ENCODE measurements at regions of chr3 and their contacts with region 1.

Region 1: DNA sequence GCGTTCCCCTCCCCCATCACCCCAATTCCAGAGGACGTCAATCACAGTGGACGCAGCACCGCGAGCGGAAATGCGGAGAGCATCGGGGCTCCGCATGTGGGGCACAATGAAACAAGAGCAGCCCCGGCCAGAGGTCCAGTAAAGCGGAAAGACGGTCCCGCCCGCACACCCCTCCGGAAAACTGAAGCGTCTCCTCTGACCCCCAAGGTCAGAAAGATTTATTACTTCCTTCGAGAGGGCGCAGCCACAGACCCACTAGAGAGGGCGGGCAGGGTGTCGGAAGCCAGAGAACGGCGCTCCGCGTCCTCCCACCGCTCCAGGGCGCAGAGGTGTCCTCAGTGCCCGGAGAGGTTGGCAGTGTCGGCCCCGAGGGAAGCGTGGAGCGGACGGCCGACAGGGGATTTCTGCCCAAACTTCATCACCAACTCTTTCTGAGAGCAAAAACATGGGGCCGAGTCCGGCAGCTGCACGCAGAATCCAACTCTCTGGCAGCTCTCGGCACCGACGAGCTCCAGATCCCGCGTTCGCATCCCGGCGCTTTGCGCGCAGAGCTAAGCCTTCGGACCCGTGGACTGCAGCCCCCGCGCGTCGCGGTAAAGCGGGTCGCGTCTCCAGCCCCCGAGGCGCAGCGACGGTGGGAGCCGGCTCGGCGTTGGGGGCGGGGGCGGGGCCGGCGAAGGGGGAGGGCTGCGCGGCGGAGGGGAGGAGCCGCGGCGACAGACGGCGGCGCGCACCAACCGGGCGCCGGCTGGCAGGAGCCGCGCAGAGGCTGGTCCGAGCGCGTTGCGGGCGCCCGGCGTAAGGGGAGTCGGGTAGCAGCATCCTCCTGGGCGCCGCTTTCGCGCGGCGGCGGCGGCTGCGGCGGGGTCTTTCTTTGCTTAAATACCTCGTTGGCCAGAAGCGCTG is at the start of gene CHST2:
- DNase-seq: peak; percentile 75
- H3K4me3 Mint-ChIP-seq: peak within 1 kb of the TSS; percentile 89
- H3K27ac Mint-ChIP-seq: peak within 1 kb of the TSS; percentile 75
- H3K4me1 Mint-ChIP-seq: peaks cover 48% of the 10 kb centered on the region
- H3K27me3 Mint-ChIP-seq: peaks cover 10% of the 10 kb centered on the region
- total RNA-seq, gene CHST2: 7.4 and 7.7 TPM in 2 replicates

Region 2: DNA sequence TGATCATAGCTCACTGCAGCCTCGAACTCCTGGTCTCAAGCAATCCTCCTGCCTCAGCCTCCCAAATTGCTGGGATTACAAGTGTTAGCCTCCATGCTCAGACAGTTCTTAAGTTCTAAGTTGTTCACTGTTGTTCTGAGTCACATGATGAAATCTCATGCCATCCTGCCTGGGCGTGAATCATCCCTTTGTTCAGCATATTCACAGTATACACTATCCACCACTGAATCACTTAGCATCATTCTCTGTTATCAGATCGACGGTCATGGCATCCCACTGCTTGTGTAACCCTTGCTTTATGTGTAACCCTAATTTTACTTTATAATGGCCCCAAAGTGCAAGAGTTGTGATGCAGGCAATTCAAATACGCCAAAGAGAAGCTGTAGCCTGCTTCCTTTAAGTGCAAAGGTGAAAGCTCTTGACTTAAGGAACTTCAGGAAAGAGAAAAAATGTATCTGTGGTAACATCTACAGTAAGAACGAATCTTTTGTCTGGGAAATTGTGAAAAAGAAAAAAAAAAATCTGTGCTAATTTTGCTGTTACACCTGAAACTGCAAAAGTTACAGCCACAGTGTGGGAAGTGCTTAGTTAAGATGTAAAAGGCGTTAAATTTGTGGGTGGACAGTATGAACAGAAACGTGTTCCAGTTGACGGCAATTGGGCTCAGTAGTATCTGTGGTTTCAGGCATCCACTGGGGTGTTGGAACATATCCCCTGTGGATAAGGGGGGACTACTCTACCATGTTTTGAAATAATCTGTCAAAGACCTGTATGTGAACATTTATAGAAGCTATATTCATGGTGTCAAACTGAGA is 311.0 kb before region 1 on chr3:
- intact Hi-C with region 1: no loop called
- DNase-seq: no peak
- H3K4me3 Mint-ChIP-seq: no peak overlapping the region
- H3K27ac Mint-ChIP-seq: no peak overlapping the region
- H3K4me1 Mint-ChIP-seq: peaks cover 7% of the 10 kb centered on the region
- H3K27me3 Mint-ChIP-seq: peaks cover 10% of the 10 kb centered on the region

Region 3: DNA sequence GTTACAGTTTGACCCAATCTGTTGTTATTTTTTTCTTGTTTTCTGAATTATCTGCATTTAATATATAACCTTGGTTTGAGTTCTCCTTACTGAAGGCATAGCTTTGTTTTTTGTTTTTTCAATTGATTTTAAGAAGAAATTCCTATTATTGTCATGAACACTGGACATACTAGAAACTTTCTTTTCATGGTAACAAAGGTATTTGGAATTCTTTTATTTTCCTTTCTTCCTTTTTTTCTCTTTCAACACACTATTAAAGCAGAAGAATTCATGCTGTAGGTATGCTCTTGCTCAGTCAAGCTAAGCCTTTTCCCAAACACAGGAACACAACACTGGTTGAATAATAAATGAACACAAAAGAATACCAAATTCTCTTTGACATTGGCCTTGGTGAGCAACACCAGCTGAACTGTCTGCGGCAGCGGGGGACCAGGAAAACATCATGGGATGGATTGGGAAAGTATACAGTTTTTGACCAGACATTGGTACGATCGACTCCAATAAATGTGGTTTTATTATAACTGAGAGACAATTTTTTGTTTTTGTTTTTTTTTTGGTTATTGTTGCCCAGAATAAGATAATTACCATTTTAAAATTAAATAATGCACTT is 94.8 kb before region 1 on chr3:
- intact Hi-C with region 1: no loop called
- DNase-seq: no peak
- H3K4me3 Mint-ChIP-seq: no peak overlapping the region
- H3K27ac Mint-ChIP-seq: no peak overlapping the region
- H3K4me1 Mint-ChIP-seq: no peaks in the 10 kb centered on the region
- H3K27me3 Mint-ChIP-seq: no peaks in the 10 kb centered on the region

Region 4: DNA sequence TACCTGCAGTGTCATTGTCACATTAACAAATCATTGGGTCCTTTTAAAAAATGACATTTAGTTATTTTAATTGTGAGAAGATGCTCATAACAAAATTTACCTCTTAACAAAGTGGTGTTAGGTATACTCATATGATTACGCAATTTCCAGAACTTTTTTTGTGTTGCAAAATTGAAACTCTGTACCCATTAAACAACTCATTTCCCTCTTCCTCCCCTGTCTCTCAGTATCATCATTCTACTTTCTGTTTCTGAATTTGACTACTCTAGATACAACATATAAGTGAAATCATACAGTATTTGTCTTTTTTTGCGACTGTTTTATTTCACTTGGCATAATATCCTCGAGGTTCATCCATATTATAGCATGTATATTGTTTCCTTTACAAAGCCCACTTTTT is 58.4 kb before region 1 on chr3:
- intact Hi-C with region 1: loop called (anchors 1 kb)
- DNase-seq: no peak
- H3K4me3 Mint-ChIP-seq: no peak overlapping the region
- H3K27ac Mint-ChIP-seq: no peak overlapping the region
- H3K4me1 Mint-ChIP-seq: peaks cover 19% of the 10 kb centered on the region
- H3K27me3 Mint-ChIP-seq: no peaks in the 10 kb centered on the region

Region 5: DNA sequence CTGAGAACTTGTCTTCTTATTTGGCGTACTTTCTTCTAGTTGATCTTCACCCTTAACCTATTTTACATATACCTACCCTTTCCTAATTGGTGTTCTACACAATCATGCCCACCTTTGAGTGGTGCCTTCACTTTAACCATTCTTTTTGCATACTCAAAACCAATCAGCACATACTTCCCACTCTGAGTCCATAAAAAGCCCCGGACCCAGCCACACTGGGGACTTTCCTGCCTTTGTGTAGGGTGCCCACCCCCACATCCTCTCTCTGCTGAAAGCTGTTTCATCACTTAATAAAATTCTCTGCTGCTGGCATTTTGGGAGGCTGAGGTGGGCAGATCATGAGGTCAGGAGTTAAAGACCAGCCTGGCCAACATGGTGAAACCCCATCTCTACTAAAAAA is 15.6 kb before region 1 on chr3:
- intact Hi-C with region 1: no loop called
- DNase-seq: no peak
- H3K4me3 Mint-ChIP-seq: no peak overlapping the region
- H3K27ac Mint-ChIP-seq: no peak overlapping the region
- H3K4me1 Mint-ChIP-seq: no peaks in the 10 kb centered on the region
- H3K27me3 Mint-ChIP-seq: peaks cover 17% of the 10 kb centered on the region

Region 6: GRCh38 chr3:143192193-143192592 is 72.9 kb after region 1 on chr3:
- intact Hi-C with region 1: no loop called
- DNase-seq: no peak
- H3K4me3 Mint-ChIP-seq: no peak overlapping the region
- H3K27ac Mint-ChIP-seq: no peak overlapping the region
- H3K4me1 Mint-ChIP-seq: peaks cover 14% of the 10 kb centered on the region
- H3K27me3 Mint-ChIP-seq: no peaks in the 10 kb centered on the region

Region 7: GRCh38 chr3:143207338-143207961 is 88.2 kb after region 1 on chr3:
- intact Hi-C with region 1: loop called (anchors 5 kb)
- DNase-seq: no peak
- H3K4me3 Mint-ChIP-seq: no peak overlapping the region
- H3K27ac Mint-ChIP-seq: peak overlapping the region; percentile 61
- H3K4me1 Mint-ChIP-seq: peaks cover 33% of the 10 kb centered on the region
- H3K27me3 Mint-ChIP-seq: no peaks in the 10 kb centered on the region

Region 8: DNA sequence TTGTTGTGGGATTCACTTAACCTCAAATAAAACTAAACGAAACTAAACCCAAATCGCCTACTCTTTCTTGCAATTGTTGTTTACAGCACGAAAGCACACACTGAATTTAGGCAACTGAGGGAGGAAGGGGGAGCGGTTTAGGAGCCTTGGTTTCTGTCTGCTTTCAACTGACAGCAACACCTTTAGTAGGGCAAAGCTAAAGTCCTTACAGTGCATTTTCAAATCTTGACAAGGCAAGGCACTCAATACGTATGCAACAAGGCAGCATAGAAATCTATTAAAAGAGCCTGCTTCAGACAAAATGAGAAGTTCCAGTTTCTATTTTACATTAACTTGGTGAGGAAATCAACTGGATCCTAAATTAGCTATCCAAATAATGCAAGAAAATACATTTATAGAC is 174.9 kb after region 1 on chr3:
- intact Hi-C with region 1: loop called (anchors 5 kb)
- DNase-seq: no peak
- H3K4me3 Mint-ChIP-seq: no peak overlapping the region
- H3K27ac Mint-ChIP-seq: no peak overlapping the region
- H3K4me1 Mint-ChIP-seq: peaks cover 44% of the 10 kb centered on the region
- H3K27me3 Mint-ChIP-seq: no peaks in the 10 kb centered on the region

Region 9: GRCh38 chr3:143421556-143421955 is 302.3 kb after region 1 on chr3:
- intact Hi-C with region 1: loop called (anchors 5 kb)
- DNase-seq: no peak
- H3K4me3 Mint-ChIP-seq: no peak overlapping the region
- H3K27ac Mint-ChIP-seq: no peak overlapping the region
- H3K4me1 Mint-ChIP-seq: peaks cover 11% of the 10 kb centered on the region
- H3K27me3 Mint-ChIP-seq: peaks cover 23% of the 10 kb centered on the region

Region 10: DNA sequence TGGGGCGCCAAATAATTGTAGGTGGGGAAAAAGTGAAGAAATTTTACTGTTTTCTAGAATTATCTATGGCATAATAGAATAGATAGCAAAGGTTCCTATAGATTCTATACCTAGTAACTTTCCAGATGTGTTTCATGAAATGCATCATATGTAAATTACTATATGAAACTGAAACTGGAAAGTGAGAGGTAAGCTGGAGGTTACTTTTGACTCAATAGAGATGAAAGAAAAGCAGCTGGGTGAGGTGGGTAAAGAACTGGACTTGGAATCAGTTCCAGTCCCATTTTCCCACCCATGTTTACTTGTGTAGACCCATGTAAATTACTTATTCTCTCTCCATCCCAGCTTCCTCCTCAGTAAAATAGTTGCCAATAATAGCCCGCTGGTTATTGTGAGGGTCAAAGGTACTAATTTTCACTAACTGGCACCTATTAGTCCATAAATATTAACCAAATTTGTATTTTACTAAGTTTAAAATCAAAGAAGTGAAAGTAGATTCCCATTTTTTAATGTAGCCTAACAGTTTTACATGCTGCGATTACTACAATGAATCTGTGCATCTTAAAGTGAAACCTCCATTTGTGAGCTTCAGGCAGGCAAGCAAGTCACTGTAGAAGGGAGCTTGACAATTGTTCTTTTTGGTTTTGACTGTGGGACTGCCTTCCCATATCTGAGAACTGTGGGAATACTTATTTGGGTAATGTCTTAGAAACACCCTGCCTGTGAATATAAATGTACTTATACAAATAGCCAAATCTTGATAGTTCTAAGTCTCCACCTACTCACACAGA is 416.9 kb after region 1 on chr3:
- intact Hi-C with region 1: loop called (anchors 5 kb)
- DNase-seq: no peak
- H3K4me3 Mint-ChIP-seq: no peak overlapping the region
- H3K27ac Mint-ChIP-seq: no peak overlapping the region
- H3K4me1 Mint-ChIP-seq: peaks cover 12% of the 10 kb centered on the region
- H3K27me3 Mint-ChIP-seq: peaks cover 14% of the 10 kb centered on the region

Region 11: DNA sequence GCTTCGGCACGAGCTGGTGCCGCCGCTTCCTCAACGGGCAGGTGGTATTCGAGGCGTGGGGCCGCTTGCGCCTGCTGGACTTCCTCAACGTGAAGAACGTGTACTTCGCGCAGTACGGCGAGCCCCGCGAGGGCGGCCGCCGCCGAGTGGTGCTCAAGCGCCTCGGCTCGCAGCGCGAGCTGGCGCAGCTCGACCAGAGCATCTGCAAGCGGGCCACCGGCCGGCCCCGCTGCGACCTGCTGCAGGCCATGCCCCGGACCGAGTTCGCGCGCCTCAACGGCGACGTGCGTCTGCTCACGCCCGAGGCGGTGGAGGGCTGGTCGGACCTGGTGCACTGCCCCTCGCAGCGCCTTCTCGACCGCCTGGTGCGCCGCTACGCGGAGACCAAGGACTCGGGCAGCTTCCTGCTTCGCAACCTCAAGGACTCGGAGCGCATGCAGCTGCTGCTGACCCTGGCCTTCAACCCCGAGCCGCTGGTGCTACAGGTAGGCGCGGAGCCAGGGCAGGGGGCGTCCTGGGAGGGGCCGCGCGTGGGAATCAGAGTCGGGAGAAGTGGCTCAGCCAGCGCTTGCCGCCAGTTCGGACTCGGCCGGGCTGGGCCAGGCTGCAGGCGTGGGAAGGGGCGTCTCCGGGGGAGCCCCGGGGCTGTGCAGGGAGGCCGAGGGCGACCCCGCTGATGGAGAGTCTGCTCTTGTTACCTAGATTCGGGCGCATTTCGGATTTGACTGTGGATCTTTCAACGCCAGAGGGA is 853.4 kb after region 1 on chr3:
- intact Hi-C with region 1: loop called (anchors 1 kb)
- DNase-seq: peak; percentile 57
- H3K4me3 Mint-ChIP-seq: peak overlapping the region; percentile 97
- H3K27ac Mint-ChIP-seq: peak overlapping the region; percentile 85
- H3K4me1 Mint-ChIP-seq: peaks cover 26% of the 10 kb centered on the region
- H3K27me3 Mint-ChIP-seq: peaks cover 21% of the 10 kb centered on the region

Measured in activated T-helper 2 cell treated with anti-CD3 and anti-CD28 coated beads, Interferon-gamma antibody, Interleukin-2, Interleukin-4, amounts not matched to agents 10 μg/mL and 5 μg/mL and 100 μg/mL, durations not matched to agents 14 hours and 24 hours and 36 hours (primary cell).